ENCODE measurements at regions of chr1 and their contacts with region 1.

Region 1: GRCh38 chr1:228515200-228515834 is 28.1 kb downstream of the RNF187 start:
- DNase-seq: peak; percentile 60
- H3K4me3 ChIP-seq: no peak overlapping the region
- H3K27ac ChIP-seq: no peak overlapping the region
- H3K4me1 ChIP-seq: no peaks in the 10 kb centered on the region
- H3K27me3 ChIP-seq: peaks cover 21 to 22% of the 10 kb centered on the region in 2 experiments
- CTCF ChIP-seq: peak; percentile 56 to 58
- POLR2A ChIP-seq: no peak

Region 2: DNA sequence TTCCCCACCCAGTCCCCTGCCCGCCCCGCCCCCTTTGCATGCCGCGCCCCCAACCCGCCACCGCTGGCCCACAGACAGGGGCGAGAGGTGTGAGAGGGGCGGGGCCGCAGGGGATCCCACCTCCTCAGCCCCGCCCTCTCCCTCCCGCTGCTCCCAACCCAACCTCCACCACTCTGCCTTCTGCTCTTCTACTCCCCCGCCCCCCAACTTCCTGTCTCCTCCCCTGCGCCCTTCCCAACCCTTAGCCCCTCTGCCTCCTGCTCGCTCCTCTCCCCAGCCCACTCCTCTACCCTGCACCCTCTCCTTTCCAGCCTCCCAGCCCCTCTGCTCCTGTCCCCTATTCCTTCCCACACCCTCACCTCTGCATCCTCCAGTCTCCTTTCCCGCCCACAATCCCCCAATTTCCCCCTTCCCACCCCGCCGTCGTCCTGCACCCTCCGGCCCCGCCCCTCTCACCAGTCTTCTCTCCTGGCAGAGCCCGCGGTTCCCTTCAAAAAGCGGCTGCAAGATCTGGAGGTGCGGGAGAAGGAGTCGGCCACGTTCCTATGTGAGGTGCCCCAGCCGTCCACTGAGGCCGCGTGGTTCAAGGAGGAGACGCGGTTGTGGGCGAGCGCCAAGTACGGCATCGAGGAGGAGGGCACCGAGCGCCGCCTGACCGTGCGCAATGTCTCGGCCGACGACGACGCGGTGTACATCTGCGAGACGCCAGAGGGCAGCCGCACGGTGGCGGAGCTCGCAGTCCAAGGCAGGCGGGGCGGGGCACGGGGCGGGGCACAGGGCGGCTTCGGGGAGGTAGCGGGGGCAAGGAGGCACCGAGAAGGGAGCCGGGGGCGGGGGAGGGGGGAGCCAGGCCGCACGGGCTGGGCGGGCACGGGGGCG is 302.1 kb before region 1 on chr1:
- CTCF ChIA-PET with region 1: interaction called, 9 read pairs
- POLR2A ChIA-PET with region 1: no interaction called
- dilution Hi-C with region 1: no loop called
- intact Hi-C with region 1: loop called (anchors 1 kb)
- DNase-seq: peak; percentile 63
- H3K4me3 ChIP-seq: peak overlapping the region in 1 of 3 experiments; percentile 26
- H3K27ac ChIP-seq: no peak overlapping the region
- H3K4me1 ChIP-seq: no peaks in the 10 kb centered on the region
- H3K27me3 ChIP-seq: peaks cover 4 to 16% of the 10 kb centered on the region in 2 experiments
- CTCF ChIP-seq: peak; percentile 33 to 73
- POLR2A ChIP-seq: no peak

Region 3: DNA sequence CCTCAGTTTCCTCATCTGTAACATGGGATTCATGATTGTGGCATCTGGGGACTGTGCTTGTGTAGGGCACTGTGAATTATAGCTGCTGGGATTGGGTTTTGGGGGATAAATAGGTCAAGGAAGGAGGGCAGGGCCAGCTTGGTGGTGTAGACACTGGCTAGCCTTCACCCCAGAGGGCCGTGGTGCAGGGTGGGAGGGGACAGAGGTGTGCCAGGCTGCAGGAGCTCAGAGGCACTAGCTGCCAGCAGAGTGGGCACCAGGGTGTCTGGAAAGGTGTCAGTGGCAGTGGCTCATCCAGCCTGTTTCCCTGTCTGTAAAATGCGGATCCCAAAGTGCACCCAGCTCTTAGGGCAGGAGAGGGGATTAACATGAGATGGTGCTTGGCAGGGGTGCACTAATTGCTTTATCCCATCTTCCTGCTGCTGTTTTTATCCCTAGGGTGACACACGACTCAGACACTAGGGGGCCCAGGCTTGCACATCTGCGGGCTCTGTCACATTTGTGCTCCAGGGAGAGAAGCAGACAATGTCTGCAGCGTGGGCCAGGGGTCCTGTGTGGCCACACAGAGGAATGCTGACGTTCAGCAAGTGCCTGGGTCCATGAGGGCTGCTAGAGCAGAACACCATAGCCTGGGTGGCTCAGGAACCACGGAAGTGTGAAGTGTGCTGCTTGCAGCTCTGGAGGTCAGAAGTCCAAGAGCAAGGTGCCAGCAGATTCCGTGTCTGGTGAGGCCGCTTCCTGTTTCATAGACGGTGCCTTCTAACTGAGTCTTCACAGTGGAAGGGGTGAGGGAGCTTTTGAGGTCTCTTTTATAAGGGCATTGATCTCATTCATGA is 288.1 kb before region 1 on chr1:
- CTCF ChIA-PET with region 1: interaction called, 6 read pairs
- POLR2A ChIA-PET with region 1: no interaction called
- dilution Hi-C with region 1: no loop called
- intact Hi-C with region 1: loop called (anchors 1 kb)
- DNase-seq: peak; percentile 15
- H3K4me3 ChIP-seq: no peak overlapping the region
- H3K27ac ChIP-seq: no peak overlapping the region
- H3K4me1 ChIP-seq: no peaks in the 10 kb centered on the region
- H3K27me3 ChIP-seq: peaks cover 0 to 5% of the 10 kb centered on the region in 2 experiments
- CTCF ChIP-seq: peak; percentile 12 to 47
- POLR2A ChIP-seq: no peak

Region 4: GRCh38 chr1:228236744-228237143 is 278.6 kb before region 1 on chr1:
- CTCF ChIA-PET with region 1: interaction called, 4 read pairs
- POLR2A ChIA-PET with region 1: no interaction called
- dilution Hi-C with region 1: no loop called
- intact Hi-C with region 1: loop called (anchors 2 kb)
- DNase-seq: peak; percentile 62
- H3K4me3 ChIP-seq: no peak overlapping the region
- H3K27ac ChIP-seq: no peak overlapping the region
- H3K4me1 ChIP-seq: no peaks in the 10 kb centered on the region
- H3K27me3 ChIP-seq: peaks cover 2 to 9% of the 10 kb centered on the region in 2 experiments
- CTCF ChIP-seq: peak; percentile 84
- POLR2A ChIP-seq: no peak

Region 5: GRCh38 chr1:228378090-228378872 is 137.0 kb before region 1 on chr1:
- CTCF ChIA-PET with region 1: no interaction called
- POLR2A ChIA-PET with region 1: no interaction called
- dilution Hi-C with region 1: no loop called
- intact Hi-C with region 1: loop called (anchors 2 kb)
- DNase-seq: peak; percentile 36
- H3K4me3 ChIP-seq: peak overlapping the region in 2 of 3 experiments; percentile 29 to 41
- H3K27ac ChIP-seq: no peak overlapping the region
- H3K4me1 ChIP-seq: peaks cover 5% of the 10 kb centered on the region
- H3K27me3 ChIP-seq: peaks cover 7 to 9% of the 10 kb centered on the region in 2 experiments
- CTCF ChIP-seq: peak; percentile 47 to 56
- POLR2A ChIP-seq: no peak

Region 6: DNA sequence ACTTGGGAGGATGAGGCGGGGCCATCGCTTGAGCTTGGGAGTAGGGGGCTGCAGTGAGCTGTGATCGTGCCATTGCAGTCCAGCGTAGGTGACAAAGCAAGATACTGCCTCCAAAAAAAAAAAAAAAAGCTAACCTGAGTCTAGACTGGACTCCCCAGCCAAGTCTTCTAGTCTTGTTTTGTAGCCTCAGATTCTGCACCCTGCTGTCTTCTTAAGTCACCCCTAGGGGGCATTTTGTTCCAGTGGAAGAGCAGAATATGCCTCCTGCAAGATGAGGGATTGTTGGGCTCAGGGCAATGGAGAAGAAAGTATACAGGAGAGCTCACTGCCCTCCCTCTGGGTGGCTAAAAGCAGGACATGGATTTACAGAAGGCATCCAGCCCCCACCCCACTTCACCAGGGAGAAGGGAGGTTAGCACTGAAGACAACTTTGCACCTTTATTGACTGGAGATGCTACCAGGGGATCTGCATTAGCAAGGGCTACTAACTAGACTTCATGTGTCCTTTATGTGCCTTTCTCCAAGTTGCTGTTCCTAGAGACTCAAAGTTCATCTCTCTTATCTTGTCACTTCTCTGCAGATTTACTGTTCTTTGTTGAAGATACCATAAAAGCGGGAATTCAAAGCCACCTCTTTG is 43.4 kb before region 1 on chr1:
- CTCF ChIA-PET with region 1: interaction called, 11 read pairs
- POLR2A ChIA-PET with region 1: no interaction called
- dilution Hi-C with region 1: no loop called
- intact Hi-C with region 1: loop called (anchors 1 kb)
- DNase-seq: peak; percentile 34
- H3K4me3 ChIP-seq: no peak overlapping the region
- H3K27ac ChIP-seq: no peak overlapping the region
- H3K4me1 ChIP-seq: peaks cover 15% of the 10 kb centered on the region
- H3K27me3 ChIP-seq: peaks cover 28 to 33% of the 10 kb centered on the region in 2 experiments
- CTCF ChIP-seq: peak; percentile 38 to 55
- POLR2A ChIP-seq: no peak